Activated T-helper 1 cell treated with anti-CD3 and anti-CD28 coated beads, Interleukin-12 subunit alpha, Interleukin-12 subunit beta, Interleukin-2, Interleukin-4 antibody, amounts not matched to agents 30 ng/mL and 10 ng/mL and 1 ng/mL, durations not matched to agents 14 hours and 24 hours and 36 hours (primary cell): ENCODE measurements at regions of chr6 and their contacts with region 1.

Region 1: DNA sequence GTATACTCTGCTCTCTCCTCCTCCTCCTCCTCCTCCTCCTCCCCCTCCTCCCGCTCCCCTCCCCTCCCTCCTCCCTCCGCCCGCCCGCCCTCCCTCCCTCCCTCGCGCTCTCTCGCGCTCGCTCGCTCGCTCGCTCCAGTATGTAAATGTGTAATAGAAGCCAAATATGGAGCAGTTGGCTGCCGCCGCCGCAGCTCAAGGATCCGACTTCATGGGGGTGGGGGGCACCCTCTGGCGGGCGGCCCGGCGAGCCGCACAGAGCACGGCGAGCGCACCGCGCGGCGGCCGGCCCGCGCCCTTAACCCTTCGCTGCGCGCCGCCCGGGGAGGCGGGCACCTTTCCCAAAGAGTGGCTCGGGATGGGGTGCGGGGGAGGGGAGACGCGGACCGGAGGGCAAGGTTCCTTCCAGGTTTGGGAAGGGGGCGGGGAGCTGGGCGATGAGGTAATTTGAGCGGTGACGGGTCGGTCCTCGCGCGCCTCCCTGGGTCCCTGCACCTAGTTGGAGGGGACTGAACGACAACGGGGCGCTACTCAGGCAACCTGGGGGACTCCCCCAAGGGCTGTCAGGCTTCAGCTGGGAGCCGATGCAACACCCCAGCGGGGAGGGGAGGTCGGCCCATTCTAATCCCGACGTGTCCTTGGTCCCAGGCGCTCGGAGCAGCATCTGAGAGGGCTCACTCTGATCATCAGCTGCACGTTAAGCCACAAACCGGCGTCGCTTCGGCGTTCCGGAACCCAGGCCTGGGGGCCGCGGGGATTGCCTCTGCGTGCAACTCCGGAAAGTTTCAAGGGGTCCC is 409 bp upstream of the ATXN1 start:
- DNase-seq: peak; percentile 81
- H3K4me3 Mint-ChIP-seq: peak overlapping the region; percentile 97
- H3K27ac Mint-ChIP-seq: peak overlapping the region; percentile 99
- H3K4me1 Mint-ChIP-seq: peaks cover 77% of the 10 kb centered on the region
- H3K27me3 Mint-ChIP-seq: no peaks in the 10 kb centered on the region

Region 2: GRCh38 chr6:16319813-16320532 is 441.7 kb before region 1 on chr6:
- intact Hi-C with region 1: loop called (anchors 1 kb)
- DNase-seq: peak; percentile 65
- H3K4me3 Mint-ChIP-seq: peak overlapping the region; percentile 56
- H3K27ac Mint-ChIP-seq: peak overlapping the region; percentile 81
- H3K4me1 Mint-ChIP-seq: peaks cover 76% of the 10 kb centered on the region
- H3K27me3 Mint-ChIP-seq: no peaks in the 10 kb centered on the region

Region 3: GRCh38 chr6:16481697-16482399 is 279.8 kb before region 1 on chr6:
- intact Hi-C with region 1: loop called (anchors 1 kb)
- DNase-seq: peak; percentile 74
- H3K4me3 Mint-ChIP-seq: peak overlapping the region; percentile 56
- H3K27ac Mint-ChIP-seq: peak overlapping the region; percentile 97
- H3K4me1 Mint-ChIP-seq: peaks cover 89% of the 10 kb centered on the region
- H3K27me3 Mint-ChIP-seq: no peaks in the 10 kb centered on the region

Region 4: GRCh38 chr6:16602035-16602434 is 159.6 kb before region 1 on chr6:
- intact Hi-C with region 1: loop called (anchors 1 kb)
- DNase-seq: no peak
- H3K4me3 Mint-ChIP-seq: peak overlapping the region; percentile 28
- H3K27ac Mint-ChIP-seq: peak overlapping the region; percentile 75
- H3K4me1 Mint-ChIP-seq: peaks cover 49% of the 10 kb centered on the region
- H3K27me3 Mint-ChIP-seq: no peaks in the 10 kb centered on the region

Region 5: DNA sequence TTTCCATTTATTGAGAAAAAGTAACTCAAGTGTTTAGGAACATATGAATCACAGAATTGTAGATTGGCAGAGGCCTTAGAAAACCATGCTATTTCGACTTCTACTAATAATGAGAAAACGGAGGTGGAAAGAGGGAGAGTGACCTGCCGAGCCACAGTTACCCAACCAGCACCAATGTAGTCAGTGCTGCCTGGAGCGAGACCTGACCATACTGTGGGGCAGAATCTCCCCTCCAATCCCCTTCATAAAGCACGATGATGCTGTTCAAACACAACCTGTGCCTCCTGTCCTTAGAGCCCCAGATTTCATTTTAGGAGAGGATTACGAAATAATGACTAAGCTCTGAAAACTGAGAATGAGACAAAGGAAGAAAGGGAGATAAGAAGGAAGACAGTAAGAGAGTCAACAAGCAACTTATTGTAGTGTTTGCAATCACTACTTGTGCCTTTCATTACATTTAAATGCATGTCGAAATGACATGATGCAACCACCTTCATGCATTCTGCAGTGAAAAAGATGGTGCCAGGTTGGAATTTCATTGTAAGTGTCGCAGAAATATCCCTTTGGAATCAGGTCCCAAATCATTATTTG is 71.0 kb before region 1 on chr6:
- intact Hi-C with region 1: loop called (anchors 1 kb)
- DNase-seq: no peak
- H3K4me3 Mint-ChIP-seq: peak overlapping the region; percentile 70
- H3K27ac Mint-ChIP-seq: peak overlapping the region; percentile 98
- H3K4me1 Mint-ChIP-seq: peaks cover 90% of the 10 kb centered on the region
- H3K27me3 Mint-ChIP-seq: no peaks in the 10 kb centered on the region

Region 6: GRCh38 chr6:16741112-16742016 is 20.3 kb before region 1 on chr6:
- intact Hi-C with region 1: loop called (anchors 1 kb)
- DNase-seq: no peak
- H3K4me3 Mint-ChIP-seq: peak overlapping the region; percentile 42
- H3K27ac Mint-ChIP-seq: peak overlapping the region; percentile 68
- H3K4me1 Mint-ChIP-seq: peaks cover 73% of the 10 kb centered on the region
- H3K27me3 Mint-ChIP-seq: no peaks in the 10 kb centered on the region

Region 7: DNA sequence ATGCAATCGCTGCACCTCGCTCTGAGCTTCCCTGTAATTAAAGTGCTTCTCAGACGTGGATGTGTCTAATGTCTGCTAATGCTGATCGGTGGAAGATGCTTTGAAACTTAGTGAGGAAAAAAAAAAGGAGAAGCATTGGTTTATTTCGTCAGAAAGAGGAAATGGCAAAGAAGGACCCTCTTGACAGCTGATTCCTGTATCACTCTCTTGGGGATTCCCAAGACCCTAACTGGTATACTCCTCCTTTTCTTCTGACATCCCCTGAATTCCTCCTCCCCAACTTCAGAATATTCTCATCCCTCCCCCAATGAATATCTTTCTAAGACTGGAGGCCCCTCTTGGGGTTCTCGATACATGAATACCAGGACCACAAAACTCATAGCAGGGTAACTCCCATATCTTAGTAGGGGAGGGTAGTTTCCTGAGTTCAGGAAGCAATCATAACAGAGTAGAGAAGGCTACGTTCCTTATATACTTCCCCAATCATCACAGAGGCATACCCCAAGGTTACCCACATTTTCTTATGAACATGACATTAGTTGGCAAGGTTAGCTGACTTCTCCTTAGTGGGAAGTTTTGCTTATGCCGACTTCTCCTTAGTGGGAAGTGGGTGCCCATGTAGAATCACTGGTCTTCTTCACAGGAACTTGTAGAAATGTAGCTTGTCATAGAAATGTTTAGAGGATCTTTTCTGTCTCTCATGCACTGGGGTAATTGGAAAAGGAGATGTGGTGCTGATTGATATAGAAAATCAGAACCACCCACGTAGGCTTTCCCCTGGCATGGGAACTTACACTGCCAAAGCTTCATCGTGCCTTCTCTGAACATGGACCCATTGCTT is 63.4 kb after region 1 on chr6:
- intact Hi-C with region 1: no loop called
- DNase-seq: no peak
- H3K4me3 Mint-ChIP-seq: no peak overlapping the region
- H3K27ac Mint-ChIP-seq: no peak overlapping the region
- H3K4me1 Mint-ChIP-seq: peaks cover 27% of the 10 kb centered on the region
- H3K27me3 Mint-ChIP-seq: peaks cover 17% of the 10 kb centered on the region

Region 8: DNA sequence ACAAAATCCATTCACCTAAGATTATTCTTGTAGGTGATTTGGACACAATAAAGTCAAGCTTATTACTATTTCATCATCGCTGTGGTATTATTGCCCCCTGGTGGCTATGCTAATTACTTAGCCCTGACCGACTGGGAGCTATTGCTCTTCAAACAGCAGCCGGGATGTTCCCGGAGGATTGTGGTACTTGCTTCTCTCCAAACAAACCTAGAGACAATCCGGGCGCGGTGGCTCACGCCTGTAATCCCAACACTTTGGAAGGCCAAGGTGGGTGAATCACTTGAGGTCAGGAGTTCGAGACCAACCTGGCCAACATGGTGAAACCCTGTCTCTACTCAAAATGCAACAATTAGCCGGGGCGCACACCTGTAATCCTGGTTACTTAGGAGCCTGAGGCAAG is 324.8 kb after region 1 on chr6:
- intact Hi-C with region 1: loop called (anchors 5 kb)
- DNase-seq: no peak
- H3K4me3 Mint-ChIP-seq: no peak overlapping the region
- H3K27ac Mint-ChIP-seq: no peak overlapping the region
- H3K4me1 Mint-ChIP-seq: no peaks in the 10 kb centered on the region
- H3K27me3 Mint-ChIP-seq: peaks cover 7% of the 10 kb centered on the region